Activated B cell treated with CpG ODN at 0.5 μM for 24 hours (primary cell): ENCODE measurements at regions of chr2 and their contacts with region 1.

Region 1: GRCh38 chr2:203238704-203239526 is at the start of gene CYP20A1:
- DNase-seq: peak; percentile 98
- ATAC-seq: peak; percentile 85
- H3K4me3 Mint-ChIP-seq: peak within 1 kb of the TSS; percentile 96
- H3K27ac Mint-ChIP-seq: peak within 1 kb of the TSS; percentile 95
- H3K4me1 Mint-ChIP-seq: peaks cover 32% of the 10 kb centered on the region
- H3K27me3 Mint-ChIP-seq: no peaks in the 10 kb centered on the region
- CTCF ChIP-seq: no peak
- total RNA-seq, gene CYP20A1: 24.0 and 32.2 TPM in 2 replicates

Region 2: GRCh38 chr2:201642579-201643215 is 1596.2 kb before region 1 on chr2:
- CTCF ChIA-PET with region 1: no interaction called
- POLR2A ChIA-PET with region 1: no interaction called
- intact Hi-C with region 1: loop called (anchors 5 kb)
- DNase-seq: peak; percentile 91
- ATAC-seq: peak; percentile 86
- H3K4me3 Mint-ChIP-seq: peak overlapping the region; percentile 95
- H3K27ac Mint-ChIP-seq: peak overlapping the region; percentile 91
- H3K4me1 Mint-ChIP-seq: peaks cover 9% of the 10 kb centered on the region
- H3K27me3 Mint-ChIP-seq: no peaks in the 10 kb centered on the region
- CTCF ChIP-seq: no peak

Region 3: GRCh38 chr2:202033321-202034248 is 1205.3 kb before region 1 on chr2 and contains the start of gene FZD7:
- CTCF ChIA-PET with region 1: no interaction called
- POLR2A ChIA-PET with region 1: no interaction called
- intact Hi-C with region 1: loop called (anchors 2 kb)
- DNase-seq: peak; percentile 79
- ATAC-seq: peak; percentile 87
- H3K4me3 Mint-ChIP-seq: peak within 1 kb of the TSS; percentile 86
- H3K27ac Mint-ChIP-seq: peak within 1 kb of the TSS; percentile 14
- H3K4me1 Mint-ChIP-seq: peaks cover 12% of the 10 kb centered on the region
- H3K27me3 Mint-ChIP-seq: peaks cover 17% of the 10 kb centered on the region
- CTCF ChIP-seq: no peak
- total RNA-seq, gene FZD7: 0.33 and 0.37 TPM in 2 replicates

Region 4: DNA sequence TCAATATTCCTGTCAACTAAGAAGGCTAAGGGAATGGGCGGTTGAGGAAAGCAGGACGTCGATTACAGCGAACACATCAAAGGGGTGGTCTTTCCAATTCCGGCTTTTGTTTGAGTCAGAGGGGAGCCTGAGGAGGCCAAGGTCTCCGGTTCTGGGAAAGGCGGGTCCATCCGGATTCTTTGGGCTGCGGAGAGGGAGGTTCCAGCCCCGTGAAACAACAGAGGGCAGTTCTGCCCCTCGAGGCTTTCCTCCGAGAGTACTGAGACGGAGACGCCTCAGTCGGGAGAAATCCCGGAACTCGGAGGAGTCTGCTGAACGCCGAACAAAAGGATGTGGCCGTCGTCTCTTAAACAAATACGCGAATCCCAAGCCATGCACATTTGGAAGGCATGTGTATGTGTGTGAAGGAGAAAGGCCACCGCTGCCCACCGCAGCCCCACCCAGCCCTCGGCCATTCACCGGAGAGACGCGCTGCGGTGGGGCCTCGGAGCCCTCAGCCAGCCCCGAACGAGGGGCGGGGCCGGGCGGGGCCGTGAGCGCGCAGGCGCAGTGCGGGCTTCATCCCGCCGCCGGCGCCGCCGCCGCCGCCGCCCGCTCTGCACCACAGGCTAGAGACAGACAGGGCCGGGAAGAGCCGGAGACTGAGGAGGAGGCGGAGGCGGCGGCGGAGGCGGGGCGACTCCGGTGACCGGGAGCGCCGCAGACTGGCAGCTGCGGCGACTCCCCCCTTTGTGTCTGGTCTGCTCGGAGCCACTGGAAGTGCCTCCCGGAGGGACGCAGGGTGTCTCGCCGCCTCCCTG is 863.1 kb before region 1 on chr2 and contains the start of gene BMPR2:
- CTCF ChIA-PET with region 1: no interaction called
- POLR2A ChIA-PET with region 1: no interaction called
- intact Hi-C with region 1: loop called (anchors 2 kb)
- DNase-seq: peak; percentile 88
- ATAC-seq: peak; percentile 79
- H3K4me3 Mint-ChIP-seq: peak within 1 kb of the TSS; percentile 98
- H3K27ac Mint-ChIP-seq: peak within 1 kb of the TSS; percentile 87
- H3K4me1 Mint-ChIP-seq: peaks cover 24% of the 10 kb centered on the region
- H3K27me3 Mint-ChIP-seq: no peaks in the 10 kb centered on the region
- CTCF ChIP-seq: no peak
- total RNA-seq, gene BMPR2: 16.5 and 16.8 TPM in 2 replicates

Region 5: DNA sequence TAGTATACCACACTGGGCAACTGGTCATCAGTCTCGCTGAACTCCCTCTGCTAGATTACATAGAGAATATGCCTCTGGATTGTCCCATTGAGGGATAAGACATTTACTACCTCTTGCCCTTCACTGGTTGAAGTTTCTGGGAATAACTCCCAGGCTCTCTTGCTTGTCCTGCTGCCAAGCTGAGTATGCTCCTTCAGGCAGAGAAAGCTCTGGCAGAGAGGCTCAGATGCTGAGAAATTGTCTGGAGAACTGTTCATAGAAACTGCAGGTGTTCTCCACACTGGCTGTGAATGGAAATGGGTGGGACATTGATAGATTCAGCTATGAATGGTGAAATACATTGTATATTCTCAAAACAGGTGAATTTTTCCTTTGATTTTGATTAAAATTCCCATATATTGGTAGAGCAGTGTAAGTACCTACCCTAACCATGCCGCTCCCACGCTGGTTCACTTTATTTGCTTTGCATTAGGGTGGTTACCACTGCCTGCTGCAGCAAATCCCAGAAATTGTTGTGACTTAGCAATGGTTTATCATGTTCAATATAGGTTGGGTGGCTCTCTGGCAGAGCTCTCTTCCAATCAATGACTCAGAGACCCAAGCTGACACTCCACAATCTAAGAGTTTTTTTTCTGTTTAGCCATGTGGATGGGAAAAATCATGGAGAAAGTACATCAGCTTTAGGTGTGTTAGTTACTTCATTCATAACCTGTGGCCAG is 567.4 kb before region 1 on chr2:
- CTCF ChIA-PET with region 1: no interaction called
- POLR2A ChIA-PET with region 1: no interaction called
- intact Hi-C with region 1: loop called (anchors 2 kb)
- DNase-seq: no peak
- ATAC-seq: no peak
- H3K4me3 Mint-ChIP-seq: no peak overlapping the region
- H3K27ac Mint-ChIP-seq: peak overlapping the region; percentile 87
- H3K4me1 Mint-ChIP-seq: peaks cover 88% of the 10 kb centered on the region
- H3K27me3 Mint-ChIP-seq: no peaks in the 10 kb centered on the region
- CTCF ChIP-seq: no peak

Region 6: DNA sequence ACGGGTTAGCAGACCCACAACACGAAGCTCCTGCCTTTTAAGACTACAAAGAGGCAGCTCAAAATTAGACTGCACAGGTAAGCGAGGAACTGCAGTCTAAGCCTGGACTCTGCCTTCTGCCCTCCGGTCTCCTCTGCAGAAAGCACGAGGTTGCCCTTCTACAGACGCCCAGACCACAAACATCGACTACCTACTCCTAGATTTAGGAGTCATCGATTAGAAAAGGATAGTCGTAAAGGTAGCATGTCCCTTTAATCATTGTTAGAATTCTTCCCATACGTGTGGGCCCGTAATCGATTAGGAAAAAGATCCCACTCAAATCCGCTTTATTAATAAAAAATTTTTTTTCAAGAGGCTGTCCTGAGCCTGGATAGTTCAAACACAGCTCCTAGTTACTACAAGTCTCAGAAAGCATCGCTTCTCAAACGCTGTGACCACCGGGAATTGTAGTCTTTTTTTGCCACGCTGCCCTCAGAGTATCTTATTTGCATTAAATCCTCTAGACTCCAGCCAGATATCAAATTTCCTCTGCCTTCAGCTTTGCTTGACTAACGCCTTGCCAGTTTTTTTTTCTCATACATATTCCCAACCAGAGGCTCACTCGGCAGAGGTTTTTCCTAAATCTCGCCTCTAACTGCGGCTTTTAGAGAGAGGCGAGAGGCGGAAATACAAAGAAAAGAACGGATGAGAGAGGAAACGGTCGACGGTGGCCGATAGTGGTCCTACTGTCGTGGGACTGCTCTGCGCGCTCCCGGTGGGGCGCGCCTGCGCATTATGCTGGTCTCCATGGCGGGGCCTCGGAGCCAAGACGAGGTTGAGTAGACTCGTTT is 327.2 kb before region 1 on chr2 and contains the starts of genes CARF and WDR12:
- CTCF ChIA-PET with region 1: no interaction called
- POLR2A ChIA-PET with region 1: interaction called, 20 read pairs
- intact Hi-C with region 1: loop called (anchors 1 kb)
- DNase-seq: peak; percentile 82
- ATAC-seq: peak; percentile 85
- H3K4me3 Mint-ChIP-seq: peak within 1 kb of the TSS; percentile 97
- H3K27ac Mint-ChIP-seq: peak within 1 kb of the TSS; percentile 100
- H3K4me1 Mint-ChIP-seq: peaks cover 29% of the 10 kb centered on the region
- H3K27me3 Mint-ChIP-seq: no peaks in the 10 kb centered on the region
- CTCF ChIP-seq: no peak
- total RNA-seq, gene CARF: 10.6 and 12.0 TPM in 2 replicates
- total RNA-seq, gene WDR12: 57.5 and 63.1 TPM in 2 replicates

Region 7: GRCh38 chr2:203225423-203226039 is 13.4 kb before region 1 on chr2:
- CTCF ChIA-PET with region 1: interaction called, 9 read pairs
- POLR2A ChIA-PET with region 1: interaction called, 11 read pairs
- intact Hi-C with region 1: loop called (anchors 1 kb)
- DNase-seq: no peak
- ATAC-seq: peak; percentile 78
- H3K4me3 Mint-ChIP-seq: no peak overlapping the region
- H3K27ac Mint-ChIP-seq: no peak overlapping the region
- H3K4me1 Mint-ChIP-seq: no peaks in the 10 kb centered on the region
- H3K27me3 Mint-ChIP-seq: no peaks in the 10 kb centered on the region
- CTCF ChIP-seq: peak; percentile 65